ENCODE measurements at regions of chr5 and their contacts with region 1.

Region 1: GRCh38 chr5:147046281-147046680 is 167.7 kb upstream of the PPP2R2B start:
- DNase-seq: no peak
- ATAC-seq: no peak

Region 2: GRCh38 chr5:145378226-145378625 is 1668.1 kb before region 1 on chr5:
- intact Hi-C with region 1: no loop called
- DNase-seq: no peak
- ATAC-seq: no peak

Region 3: GRCh38 chr5:146034125-146034524 is 1012.2 kb before region 1 on chr5:
- intact Hi-C with region 1: no loop called
- DNase-seq: no peak
- ATAC-seq: no peak

Region 4: DNA sequence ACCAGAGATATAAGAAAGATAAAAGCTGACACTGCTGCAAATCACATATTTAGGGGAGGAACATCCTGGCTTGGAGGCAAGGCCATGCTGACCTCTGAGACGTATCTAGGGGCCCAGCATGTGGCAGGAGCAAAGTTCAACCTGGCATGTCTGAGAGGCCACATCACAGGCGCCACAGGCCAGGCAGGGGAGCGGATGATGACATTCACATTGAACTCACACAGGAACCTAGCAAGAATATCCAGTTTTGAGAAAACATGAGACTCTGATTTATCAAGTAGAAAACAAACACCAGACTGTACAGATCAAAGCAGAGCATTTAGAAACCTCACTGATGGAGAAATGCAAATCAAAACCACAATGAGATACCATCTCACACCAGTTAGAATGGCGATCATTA is 124.3 kb after region 1 on chr5:
- intact Hi-C with region 1: loop called (anchors 10 kb)
- DNase-seq: no peak
- ATAC-seq: no peak

Measured in sciatic nerve (tissue), 2 donors.